ENCODE measurements at regions of chr5 and their contacts with region 1.

Region 1: DNA sequence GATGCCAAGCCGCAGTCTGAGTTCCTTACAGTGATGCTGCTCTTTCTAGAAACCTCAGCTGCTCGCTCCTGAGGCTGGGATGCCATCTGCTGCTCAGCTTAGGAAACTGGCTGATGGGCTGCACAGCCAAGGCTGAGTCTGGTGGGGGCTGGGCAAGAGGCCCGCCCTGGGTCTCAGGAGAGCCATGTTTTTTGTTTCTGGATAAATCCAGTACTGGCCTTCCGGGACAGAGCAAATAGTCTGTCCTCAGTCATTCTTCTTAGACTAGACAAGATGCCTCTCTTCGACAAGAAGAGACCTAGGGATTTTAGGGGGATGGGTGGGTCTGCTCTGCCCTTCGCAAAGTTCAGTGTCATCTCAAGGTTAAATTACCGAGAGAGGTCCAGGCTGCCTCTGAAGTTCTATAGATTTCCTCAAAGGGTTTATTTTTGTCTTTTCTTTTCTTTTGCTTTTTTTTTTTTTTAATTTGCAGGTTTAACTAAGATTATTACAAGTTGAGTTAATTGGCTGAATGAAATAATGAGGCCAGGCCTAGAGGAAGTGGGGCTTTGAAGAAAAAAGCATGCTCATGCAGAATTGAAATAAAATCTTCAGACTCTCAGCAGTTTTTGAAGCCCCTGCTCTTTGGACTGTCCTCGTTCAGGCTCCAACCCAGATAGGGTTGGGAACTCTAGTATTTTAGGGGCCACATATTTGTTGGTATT is 30.6 kb upstream of the MATR3 start:
- DNase-seq: peak; percentile 79
- H3K4me3 ChIP-seq: no peak overlapping the region
- H3K27ac ChIP-seq: no peak overlapping the region
- H3K4me1 ChIP-seq: peaks cover 6% of the 10 kb centered on the region
- H3K27me3 ChIP-seq: no peaks in the 10 kb centered on the region
- CTCF ChIP-seq: peak; percentile 90 to 98

Region 2: GRCh38 chr5:138594305-138595058 is 668.4 kb before region 1 on chr5:
- CTCF ChIA-PET with region 1: no interaction called
- dilution Hi-C with region 1: no loop called
- in situ Hi-C with region 1: loop called (anchors 25 kb)
- intact Hi-C with region 1: loop called (anchors 1 kb)
- DNase-seq: no peak
- H3K4me3 ChIP-seq: no peak overlapping the region
- H3K27ac ChIP-seq: no peak overlapping the region
- H3K4me1 ChIP-seq: no peaks in the 10 kb centered on the region
- H3K27me3 ChIP-seq: no peaks in the 10 kb centered on the region
- CTCF ChIP-seq: peak; percentile 46 to 50

Region 3: GRCh38 chr5:138752951-138753793 is 509.7 kb before region 1 on chr5 and contains the start of gene CTNNA1:
- CTCF ChIA-PET with region 1: no interaction called
- dilution Hi-C with region 1: no loop called
- in situ Hi-C with region 1: no loop called
- intact Hi-C with region 1: loop called (anchors 5 kb)
- DNase-seq: peak; percentile 83
- H3K4me3 ChIP-seq: peak within 1 kb of the TSS; percentile 88 to 99 (median 94)
- H3K27ac ChIP-seq: peak within 1 kb of the TSS; percentile 94
- H3K4me1 ChIP-seq: peaks cover 11% of the 10 kb centered on the region
- H3K27me3 ChIP-seq: no peaks in the 10 kb centered on the region
- CTCF ChIP-seq: no peak
- total RNA-seq, gene CTNNA1: 348 to 366 TPM

Region 4: GRCh38 chr5:138869763-138870500 is 393.0 kb before region 1 on chr5:
- CTCF ChIA-PET with region 1: no interaction called
- dilution Hi-C with region 1: no loop called
- in situ Hi-C with region 1: loop called in 1 of 2 experiments (anchors 25 kb)
- intact Hi-C with region 1: loop called (anchors 1 kb)
- DNase-seq: peak; percentile 56
- H3K4me3 ChIP-seq: peak overlapping the region in 2 of 3 experiments; percentile 31 to 45
- H3K27ac ChIP-seq: peak overlapping the region; percentile 71
- H3K4me1 ChIP-seq: peaks cover 55% of the 10 kb centered on the region
- H3K27me3 ChIP-seq: no peaks in the 10 kb centered on the region
- CTCF ChIP-seq: no peak

Region 5: GRCh38 chr5:139091439-139092156 is 171.3 kb before region 1 on chr5:
- CTCF ChIA-PET with region 1: interaction called, 3 read pairs
- dilution Hi-C with region 1: no loop called
- in situ Hi-C with region 1: no loop called
- intact Hi-C with region 1: loop called (anchors 5 kb)
- DNase-seq: no peak
- H3K4me3 ChIP-seq: no peak overlapping the region
- H3K27ac ChIP-seq: no peak overlapping the region
- H3K4me1 ChIP-seq: no peaks in the 10 kb centered on the region
- H3K27me3 ChIP-seq: no peaks in the 10 kb centered on the region
- CTCF ChIP-seq: peak in 1 of 2 donors; percentile 34

Measured in mammary epithelial cell (primary cell).